ENCODE measurements at regions of chr13 and their contacts with region 1.

Region 1: DNA sequence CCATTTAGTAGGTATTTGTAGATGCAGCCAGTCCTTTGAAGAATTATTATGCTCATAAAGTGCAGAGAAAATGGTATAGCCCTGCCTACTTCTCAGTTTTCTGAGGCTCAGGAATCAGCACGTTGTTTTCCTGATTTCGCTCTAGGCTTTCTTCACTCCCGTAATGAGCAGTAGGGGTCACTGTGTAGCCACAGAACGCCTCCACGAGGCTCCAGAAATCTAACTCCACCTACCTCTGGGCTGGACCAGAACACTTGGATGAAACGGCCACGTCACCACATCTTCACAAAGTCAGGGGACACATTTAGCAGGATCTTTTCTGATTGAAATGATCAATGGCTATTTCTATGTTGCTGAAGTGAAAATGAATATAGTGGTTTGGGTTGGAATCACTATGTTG is 49.8 kb upstream of the GTF3A start:
- DNase-seq: peak; percentile 26
- H3K4me3 ChIP-seq: no peak overlapping the region
- H3K27me3 ChIP-seq: peaks cover 9% of the 10 kb centered on the region
- CTCF ChIP-seq: peak; percentile 83

Region 2: GRCh38 chr13:27259831-27260230 is 114.8 kb before region 1 on chr13:
- CTCF ChIA-PET with region 1: no interaction called
- POLR2A ChIA-PET with region 1: no interaction called
- DNase-seq: no peak
- H3K4me3 ChIP-seq: no peak overlapping the region
- H3K27me3 ChIP-seq: no peaks in the 10 kb centered on the region
- CTCF ChIP-seq: no peak

Region 3: DNA sequence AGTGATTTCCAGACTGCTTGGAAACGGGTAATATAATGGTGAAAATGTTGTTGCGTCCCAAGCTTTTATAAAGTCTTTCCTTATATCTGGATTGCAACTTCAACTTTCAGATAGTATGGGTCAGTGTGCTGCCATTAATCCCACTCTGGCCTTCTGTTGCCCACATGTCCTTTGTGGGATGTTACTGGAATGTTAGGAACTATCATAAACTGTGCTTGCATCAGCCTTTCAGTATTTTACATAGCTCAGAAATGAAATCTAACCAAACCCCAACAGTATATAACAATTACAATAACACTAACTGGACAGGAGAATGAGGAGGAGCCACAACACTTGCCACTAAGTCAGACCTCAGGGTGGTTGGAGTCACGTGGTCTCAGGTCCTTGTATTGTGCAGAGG is 166.7 kb after region 1 on chr13:
- CTCF ChIA-PET with region 1: interaction called, 18 read pairs
- POLR2A ChIA-PET with region 1: no interaction called
- DNase-seq: peak; percentile 70
- H3K4me3 ChIP-seq: no peak overlapping the region
- H3K27me3 ChIP-seq: 0 out of 2 replicates have a peak, but pooled peaks cover under 1% of the 10 kb centered on the region
- CTCF ChIP-seq: no peak

Region 4: DNA sequence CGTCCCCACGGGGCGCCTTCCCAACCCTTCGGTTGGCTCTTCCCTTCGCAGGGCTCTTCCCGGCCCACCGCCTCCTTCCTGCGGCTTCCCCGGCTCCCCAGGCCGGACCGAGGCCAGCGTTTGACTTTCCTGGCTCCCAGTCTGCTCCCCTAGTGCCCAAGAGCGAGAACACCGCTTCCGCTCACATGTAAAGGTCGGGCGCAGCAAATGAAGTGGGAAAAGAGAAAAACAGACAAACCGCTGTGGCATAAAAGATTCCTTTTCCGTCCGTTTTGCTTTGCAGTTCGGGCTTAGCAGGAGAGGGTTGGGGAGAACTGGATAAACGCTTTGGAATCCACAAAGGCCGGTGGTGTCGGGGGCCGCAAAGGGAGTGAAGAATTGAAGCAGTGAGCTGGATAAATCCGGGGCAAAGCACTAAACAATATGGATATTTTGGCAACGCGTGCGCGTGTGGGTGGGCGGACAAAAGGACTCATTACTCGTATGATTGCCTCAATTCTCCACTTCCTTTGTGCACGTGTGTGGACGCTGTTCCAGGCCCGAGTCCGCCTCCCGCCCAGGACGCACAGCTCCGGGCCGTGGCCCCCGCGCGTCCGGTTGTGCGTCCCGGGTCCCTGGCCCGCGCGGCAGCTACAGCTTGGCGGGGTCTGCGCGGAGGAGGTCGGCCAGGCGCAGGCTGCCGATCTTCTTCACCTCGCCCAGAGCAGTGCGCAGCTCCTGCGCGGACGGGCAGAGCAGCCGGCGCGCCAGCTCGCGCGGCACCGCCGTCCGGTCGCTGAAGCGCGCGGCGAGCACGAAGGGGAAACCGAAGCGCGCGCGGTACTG is 603.0 kb after region 1 on chr13:
- CTCF ChIA-PET with region 1: interaction called, 28 read pairs
- POLR2A ChIA-PET with region 1: no interaction called
- DNase-seq: no peak
- H3K4me3 ChIP-seq: no peak overlapping the region
- H3K27me3 ChIP-seq: peaks cover 72% of the 10 kb centered on the region
- CTCF ChIP-seq: no peak